Right cardiac atrium (tissue), 5 donors: ENCODE measurements at regions of chr18 and their contacts with region 1.

Region 1: GRCh38 chr18:55322178-55322735 is 265.7 kb downstream of the TCF4 start:
- DNase-seq: peak; percentile 87 to 94 (median 93)
- ATAC-seq: peak; percentile 91 to 93
- H3K4me3 ChIP-seq: peak overlapping the region; percentile 82
- H3K27ac ChIP-seq: peak overlapping the region; percentile 100
- H3K4me1 ChIP-seq: no peaks in the 10 kb centered on the region
- H3K27me3 ChIP-seq: no peaks in the 10 kb centered on the region

Region 2: GRCh38 chr18:55234366-55235093 is 87.7 kb before region 1 on chr18:
- intact Hi-C with region 1: loop called in 1 of 4 experiments (anchors 10 kb)
- DNase-seq: peak; percentile 72 to 89 (median 83)
- ATAC-seq: peak; percentile 85 to 94
- H3K4me3 ChIP-seq: no peak overlapping the region
- H3K27ac ChIP-seq: peak overlapping the region; percentile 21
- H3K4me1 ChIP-seq: peaks cover 5% of the 10 kb centered on the region
- H3K27me3 ChIP-seq: no peaks in the 10 kb centered on the region

Region 3: DNA sequence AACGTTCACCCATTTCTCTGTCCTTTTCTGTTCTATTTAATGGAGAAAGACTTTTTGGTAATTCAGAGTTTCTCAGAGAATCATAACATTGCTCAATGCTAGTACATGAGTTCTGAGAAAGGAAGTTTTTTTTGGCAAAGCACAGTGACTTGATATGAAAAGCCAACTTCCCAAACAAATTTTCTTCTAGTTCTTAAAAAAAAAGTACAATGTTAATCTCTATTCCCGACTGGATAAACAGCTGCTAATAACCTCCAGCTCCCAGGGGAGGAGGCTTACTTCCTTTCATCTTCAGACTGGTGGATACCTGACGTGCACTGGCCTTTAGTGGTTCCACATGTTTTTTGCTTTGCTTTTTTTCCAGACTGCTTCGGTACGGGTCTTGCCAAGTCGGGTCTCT is 78.4 kb before region 1 on chr18:
- intact Hi-C with region 1: loop called in 2 of 4 experiments (anchors 5 to 10 kb)
- DNase-seq: peak in 2 of 3 donors; percentile 42 to 53
- ATAC-seq: peak; percentile 77 to 90
- H3K4me3 ChIP-seq: peak overlapping the region; percentile 22
- H3K27ac ChIP-seq: peak overlapping the region; percentile 95
- H3K4me1 ChIP-seq: peaks cover 6% of the 10 kb centered on the region
- H3K27me3 ChIP-seq: no peaks in the 10 kb centered on the region

Region 4: DNA sequence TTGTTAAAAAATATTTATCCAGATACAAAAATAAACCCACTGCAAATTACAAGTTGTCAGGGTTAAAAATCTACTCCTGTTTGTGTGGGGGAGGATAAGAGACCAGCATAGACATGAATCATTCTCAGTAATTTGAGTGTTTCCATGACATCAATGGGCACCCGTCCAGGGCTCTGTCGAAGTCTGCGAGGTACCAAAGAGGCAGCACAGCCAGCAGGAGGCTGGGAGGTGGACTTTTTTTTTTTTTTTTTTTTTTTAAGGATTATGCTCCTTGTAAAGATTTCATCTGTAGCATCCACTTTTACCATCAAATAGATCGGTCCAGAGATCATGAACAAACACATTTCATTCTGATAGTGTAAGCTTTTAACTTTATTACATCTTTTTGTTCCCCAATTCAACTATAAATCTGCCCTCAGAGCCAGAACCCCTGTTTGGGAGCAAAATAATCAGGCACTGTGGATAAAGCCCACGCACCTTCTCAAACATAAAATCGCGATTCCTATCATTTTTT is 83.7 kb after region 1 on chr18:
- intact Hi-C with region 1: loop called in 1 of 4 experiments (anchors 10 kb)
- DNase-seq: peak; percentile 92 to 96 (median 93)
- ATAC-seq: peak; percentile 91 to 95
- H3K4me3 ChIP-seq: peak overlapping the region; percentile 16
- H3K27ac ChIP-seq: no peak overlapping the region
- H3K4me1 ChIP-seq: no peaks in the 10 kb centered on the region
- H3K27me3 ChIP-seq: no peaks in the 10 kb centered on the region

Region 5: DNA sequence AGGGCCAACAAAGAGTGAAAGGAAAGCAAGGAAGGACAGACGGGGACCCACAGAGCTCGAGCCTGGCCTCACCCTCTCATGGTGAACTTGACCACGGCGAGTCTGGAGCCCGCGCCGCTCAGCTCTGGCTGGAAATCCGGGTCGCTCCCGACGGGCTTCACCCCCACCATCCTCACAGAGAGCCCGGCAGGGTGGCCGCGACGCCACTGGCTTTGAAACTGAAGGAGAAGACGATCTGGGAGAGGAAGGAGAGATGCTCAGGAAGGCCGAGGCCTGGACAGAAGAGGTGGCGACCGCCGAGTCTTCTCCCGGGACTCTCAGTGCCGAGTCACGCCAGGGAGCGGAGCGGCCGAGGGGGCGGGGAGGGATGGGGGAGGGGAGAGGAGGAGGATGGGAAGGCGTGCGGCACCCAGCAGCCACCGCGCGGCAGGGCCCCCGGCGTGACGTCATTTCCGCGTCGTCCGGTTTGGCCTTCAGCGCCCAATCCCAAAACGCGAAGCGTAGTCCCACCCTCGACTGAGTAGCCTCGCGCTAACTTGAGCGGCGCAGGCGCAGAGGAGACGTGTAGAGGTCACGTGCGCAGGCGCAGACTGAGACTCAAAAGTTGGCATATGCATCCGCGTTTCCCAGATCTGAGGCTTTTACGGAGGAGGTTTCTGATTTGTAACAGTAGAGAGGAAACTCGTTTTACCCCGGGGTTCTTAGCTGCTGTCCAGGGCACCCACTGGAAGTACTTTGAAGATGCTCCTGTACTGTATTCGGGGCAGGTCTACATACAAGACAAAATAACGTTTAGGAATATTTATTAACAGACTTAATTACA is 1316.2 kb after region 1 on chr18 and contains the start of gene TXNL1:
- intact Hi-C with region 1: loop called in 1 of 4 experiments (anchors 5 kb)
- DNase-seq: peak; percentile 100
- ATAC-seq: peak; percentile 99 to 100
- H3K4me3 ChIP-seq: peak within 1 kb of the TSS; percentile 85
- H3K27ac ChIP-seq: peak within 1 kb of the TSS; percentile 93
- H3K4me1 ChIP-seq: peaks cover 2% of the 10 kb centered on the region
- H3K27me3 ChIP-seq: no peaks in the 10 kb centered on the region
- total RNA-seq, gene TXNL1: 77.9 to 91.9 (median 85.0) TPM